OCI-LY7 (cell line): ENCODE measurements at regions of chr9 and their contacts with region 1.

Region 1: DNA sequence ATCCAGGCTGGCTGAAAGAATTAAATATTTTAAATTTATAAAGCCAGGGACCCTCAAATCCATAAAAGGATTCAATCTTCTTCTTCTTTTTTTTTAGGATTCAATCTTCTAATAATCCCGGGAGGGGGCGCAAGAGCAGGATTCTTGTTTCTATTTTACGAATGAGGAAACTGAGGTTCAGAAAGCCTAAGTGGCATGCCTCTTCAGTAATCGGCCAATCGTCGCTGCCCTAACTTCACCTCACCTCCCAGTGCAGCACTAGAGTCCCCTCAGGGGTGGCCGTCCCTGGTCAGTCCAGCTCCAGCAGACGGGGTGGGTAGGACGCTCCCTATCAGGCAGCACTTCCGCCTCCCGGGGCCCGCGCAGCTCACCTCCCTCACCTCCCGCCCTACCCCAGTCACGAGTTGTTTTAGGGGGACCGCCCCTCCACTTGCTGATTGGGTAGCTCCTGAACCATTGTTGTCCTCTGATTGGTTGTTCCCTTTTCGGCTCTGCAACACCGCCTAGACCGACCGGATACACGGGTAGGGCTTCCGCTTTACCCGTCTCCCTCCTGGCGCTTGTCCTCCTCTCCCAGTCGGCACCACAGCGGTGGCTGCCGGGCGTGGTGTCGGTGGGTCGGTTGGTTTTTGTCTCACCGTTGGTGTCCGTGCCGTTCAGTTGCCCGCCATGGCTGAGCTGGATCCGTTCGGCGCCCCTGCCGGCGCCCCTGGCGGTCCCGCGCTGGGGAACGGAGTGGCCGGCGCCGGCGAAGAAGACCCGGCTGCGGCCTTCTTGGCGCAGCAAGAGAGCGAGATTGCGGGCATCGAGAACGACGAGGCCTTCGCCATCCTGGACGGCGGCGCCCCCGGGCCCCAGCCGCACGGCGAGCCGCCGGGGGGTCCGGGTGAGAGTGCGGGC is at the start of gene CLTA:
- DNase-seq: peak; percentile 99
- H3K4me3 ChIP-seq: peak within 1 kb of the TSS; percentile 92
- H3K27ac ChIP-seq: peak within 1 kb of the TSS; percentile 73
- H3K4me1 ChIP-seq: peaks cover 40% of the 10 kb centered on the region
- CTCF ChIP-seq: peak; percentile 93
- total RNA-seq, gene CLTA: 150 and 176 TPM in 2 replicates

Region 2: DNA sequence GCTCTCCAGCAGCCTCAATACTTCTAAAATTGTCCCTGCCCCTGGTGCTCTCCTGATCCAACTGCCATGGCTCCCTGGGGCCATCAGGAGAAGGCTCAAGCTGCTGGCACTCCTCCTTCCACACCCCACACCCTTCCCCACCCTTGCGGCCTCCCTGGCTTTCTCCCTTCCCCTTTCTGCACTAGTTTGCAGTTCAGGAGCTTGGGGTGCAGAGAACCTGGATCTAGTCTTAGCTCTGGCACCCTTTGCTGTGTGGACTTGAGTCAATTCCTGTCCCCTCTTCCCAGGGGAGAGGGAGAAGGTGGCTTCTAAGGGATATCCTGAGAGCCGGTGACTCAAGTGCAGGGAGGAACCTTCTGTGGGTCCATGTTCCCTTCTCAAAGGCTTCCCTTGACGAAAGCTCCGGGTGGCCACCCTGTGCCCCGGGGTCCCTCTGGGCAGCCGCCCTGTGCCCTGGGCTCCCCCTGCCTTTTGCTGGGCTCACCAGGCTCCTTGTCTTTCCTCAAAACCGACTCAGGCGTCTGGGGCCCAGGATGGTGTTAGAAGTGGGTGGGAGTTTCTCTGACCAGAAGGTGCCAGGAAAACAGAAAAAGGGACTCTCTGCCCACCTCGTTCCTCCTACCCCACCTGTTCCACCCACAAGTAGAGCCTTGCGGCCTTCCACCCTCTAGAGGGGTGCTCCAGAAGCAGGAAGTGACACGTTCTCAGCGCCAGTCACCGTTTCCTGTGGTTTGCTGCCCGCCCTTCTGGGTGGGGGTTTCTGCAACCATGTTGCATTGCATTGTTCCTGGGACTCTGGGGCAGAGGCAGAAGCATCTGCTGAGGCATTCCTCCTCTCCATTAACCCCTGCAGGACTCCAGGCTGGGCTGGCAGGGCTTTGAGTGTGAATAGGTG is 39.1 kb before region 1 on chr9:
- CTCF ChIA-PET with region 1: no interaction called
- POLR2A ChIA-PET with region 1: interaction called, 4 read pairs
- intact Hi-C with region 1: loop called (anchors 2 kb)
- DNase-seq: peak; percentile 92
- H3K4me3 ChIP-seq: peak overlapping the region; percentile 64
- H3K27ac ChIP-seq: peak overlapping the region; percentile 74
- H3K4me1 ChIP-seq: peaks cover 46% of the 10 kb centered on the region
- CTCF ChIP-seq: no peak

Region 3: GRCh38 chr9:36204906-36205547 is 14.4 kb after region 1 on chr9:
- CTCF ChIA-PET with region 1: no interaction called
- POLR2A ChIA-PET with region 1: interaction called, 18 read pairs
- intact Hi-C with region 1: no loop called
- DNase-seq: no peak
- H3K4me3 ChIP-seq: no peak overlapping the region
- H3K27ac ChIP-seq: no peak overlapping the region
- H3K4me1 ChIP-seq: no peaks in the 10 kb centered on the region
- CTCF ChIP-seq: 0 out of 2 replicates have a peak, but pooled peaks have one; percentile 23

Region 4: GRCh38 chr9:36245906-36246305 is 55.3 kb after region 1 on chr9:
- CTCF ChIA-PET with region 1: no interaction called
- POLR2A ChIA-PET with region 1: no interaction called
- intact Hi-C with region 1: loop called (anchors 5 kb)
- DNase-seq: no peak
- H3K4me3 ChIP-seq: no peak overlapping the region
- H3K27ac ChIP-seq: no peak overlapping the region
- H3K4me1 ChIP-seq: peaks cover 6% of the 10 kb centered on the region
- CTCF ChIP-seq: no peak

Region 5: DNA sequence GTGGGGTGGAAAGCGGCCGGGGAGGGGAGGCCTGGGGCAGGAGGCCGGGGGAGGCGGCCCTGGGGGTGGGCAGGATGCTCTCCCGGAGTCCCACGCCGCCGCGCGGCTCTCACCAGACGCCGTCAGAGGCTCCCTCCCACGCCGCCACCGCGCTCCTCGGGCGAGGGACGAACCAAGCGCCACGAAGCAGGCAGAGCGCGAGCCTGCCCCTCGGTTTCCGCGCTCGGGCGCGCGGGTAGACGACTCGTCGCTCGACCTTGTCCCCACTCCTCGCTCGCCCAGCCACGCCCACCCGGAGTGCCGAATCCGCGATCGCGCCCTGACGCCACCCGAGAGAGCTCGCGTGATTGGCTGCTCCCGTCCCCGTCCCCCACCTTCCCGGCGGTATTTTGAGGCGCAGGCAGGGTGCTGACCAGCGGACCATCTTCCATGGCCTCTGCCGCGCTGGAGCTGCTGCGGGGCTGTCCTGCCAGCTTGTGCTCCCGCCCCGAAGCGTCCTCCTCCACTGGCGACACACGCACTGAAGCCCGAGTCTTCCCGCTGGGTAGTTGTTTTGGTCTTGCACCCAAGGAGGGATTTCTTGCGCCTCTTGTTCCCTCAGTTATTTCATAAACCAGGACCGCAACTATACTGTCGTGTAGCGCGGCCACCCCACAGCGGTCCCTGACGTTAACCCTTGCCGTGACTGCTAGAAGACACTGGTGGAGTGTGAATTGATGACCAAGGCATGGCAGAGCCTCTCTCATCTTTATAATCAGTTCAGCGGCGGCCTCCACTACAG is 67.8 kb after region 1 on chr9 and contains the start of gene GNE:
- CTCF ChIA-PET with region 1: no interaction called
- POLR2A ChIA-PET with region 1: interaction called, 10 read pairs
- intact Hi-C with region 1: loop called (anchors 1 kb)
- DNase-seq: peak; percentile 94
- H3K4me3 ChIP-seq: peak within 1 kb of the TSS; percentile 79
- H3K27ac ChIP-seq: peak within 1 kb of the TSS; percentile 33
- H3K4me1 ChIP-seq: peaks cover 10% of the 10 kb centered on the region
- CTCF ChIP-seq: no peak
- total RNA-seq, gene GNE: 12.9 and 15.5 TPM in 2 replicates

Region 6: DNA sequence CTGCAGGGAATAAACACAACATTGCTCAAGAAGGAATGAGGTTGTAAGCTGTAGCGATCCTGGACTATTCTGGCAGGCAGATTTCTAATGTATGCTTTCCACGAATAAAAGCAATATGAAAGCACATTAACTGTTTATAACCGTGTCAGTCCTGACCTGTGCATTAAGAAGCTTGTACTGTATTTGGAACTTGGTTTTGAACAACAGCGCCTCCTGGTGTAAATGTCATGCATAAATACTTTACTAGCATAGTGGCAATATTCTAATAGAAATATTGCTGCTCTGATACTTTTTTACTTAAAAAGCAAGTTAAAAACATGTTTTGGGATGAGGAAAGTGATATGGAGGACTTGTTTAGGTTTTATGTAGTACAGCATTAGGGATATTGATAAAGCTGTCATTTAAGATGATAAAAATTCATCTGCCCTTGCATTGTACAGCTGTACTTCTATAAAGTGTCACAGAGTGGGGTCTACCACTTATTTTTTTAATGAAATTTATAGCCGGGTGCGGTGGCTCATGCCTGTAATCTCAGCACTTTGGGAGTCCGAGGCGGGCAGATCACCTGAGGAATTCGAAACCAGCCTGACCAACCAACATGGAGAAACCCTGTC is 138.3 kb after region 1 on chr9:
- CTCF ChIA-PET with region 1: interaction called, 3 read pairs
- POLR2A ChIA-PET with region 1: interaction called, 4 read pairs
- intact Hi-C with region 1: loop called (anchors 1 kb)
- DNase-seq: peak; percentile 78
- H3K4me3 ChIP-seq: no peak overlapping the region
- H3K27ac ChIP-seq: no peak overlapping the region
- H3K4me1 ChIP-seq: no peaks in the 10 kb centered on the region
- CTCF ChIP-seq: peak; percentile 96

Region 7: GRCh38 chr9:36364577-36364976 is 173.9 kb after region 1 on chr9:
- CTCF ChIA-PET with region 1: no interaction called
- POLR2A ChIA-PET with region 1: no interaction called
- intact Hi-C with region 1: no loop called
- DNase-seq: no peak
- H3K4me3 ChIP-seq: no peak overlapping the region
- H3K27ac ChIP-seq: no peak overlapping the region
- H3K4me1 ChIP-seq: no peaks in the 10 kb centered on the region
- CTCF ChIP-seq: no peak